Tibial artery (tissue), 4 donors: ENCODE measurements at regions of chr19 and their contacts with region 1.

Region 1: DNA sequence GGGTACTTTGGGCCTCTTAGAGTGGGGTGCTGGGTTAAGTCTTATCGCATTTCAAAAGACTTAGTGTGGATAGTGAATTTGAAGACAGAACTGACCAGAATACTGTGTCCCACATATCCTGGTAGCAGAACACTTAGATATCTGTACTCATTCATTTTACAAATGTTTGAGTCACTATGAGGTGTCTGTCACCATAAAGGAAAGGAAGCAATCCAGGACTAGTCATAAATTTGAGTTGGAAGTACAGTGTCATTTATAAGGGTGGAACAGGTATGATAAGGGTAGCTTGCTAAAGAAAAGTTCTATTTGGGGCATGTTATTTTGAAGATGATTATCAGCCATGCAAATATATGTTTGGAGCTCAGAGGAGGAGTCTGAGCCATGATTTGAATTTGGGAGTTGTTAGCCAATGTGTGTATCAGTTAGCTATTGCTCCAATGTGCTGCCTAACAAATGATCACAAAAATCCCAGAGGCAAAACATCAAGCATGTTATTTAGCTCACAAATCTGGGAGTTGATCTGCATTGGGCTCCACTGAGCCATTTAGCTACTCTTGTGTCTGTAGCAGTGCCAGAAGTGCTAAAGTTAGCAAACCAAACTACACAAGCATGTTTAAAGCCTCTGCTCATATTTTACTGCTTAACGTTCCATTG is 20.3 kb downstream of the ZNF699 start:
- DNase-seq: no peak
- H3K4me3 ChIP-seq: no peak overlapping the region
- H3K27ac ChIP-seq: no peak overlapping the region
- H3K4me1 ChIP-seq: no peaks in the 10 kb centered on the region
- H3K27me3 ChIP-seq: no peaks in the 10 kb centered on the region
- CTCF ChIP-seq: no peak

Region 2: GRCh38 chr19:9370738-9371619 is 81.6 kb after region 1 on chr19:
- intact Hi-C with region 1: loop called (anchors 10 kb)
- DNase-seq: no peak
- H3K4me3 ChIP-seq: no peak overlapping the region
- H3K27ac ChIP-seq: no peak overlapping the region
- H3K4me1 ChIP-seq: no peaks in the 10 kb centered on the region
- H3K27me3 ChIP-seq: no peaks in the 10 kb centered on the region
- CTCF ChIP-seq: no peak

Region 3: DNA sequence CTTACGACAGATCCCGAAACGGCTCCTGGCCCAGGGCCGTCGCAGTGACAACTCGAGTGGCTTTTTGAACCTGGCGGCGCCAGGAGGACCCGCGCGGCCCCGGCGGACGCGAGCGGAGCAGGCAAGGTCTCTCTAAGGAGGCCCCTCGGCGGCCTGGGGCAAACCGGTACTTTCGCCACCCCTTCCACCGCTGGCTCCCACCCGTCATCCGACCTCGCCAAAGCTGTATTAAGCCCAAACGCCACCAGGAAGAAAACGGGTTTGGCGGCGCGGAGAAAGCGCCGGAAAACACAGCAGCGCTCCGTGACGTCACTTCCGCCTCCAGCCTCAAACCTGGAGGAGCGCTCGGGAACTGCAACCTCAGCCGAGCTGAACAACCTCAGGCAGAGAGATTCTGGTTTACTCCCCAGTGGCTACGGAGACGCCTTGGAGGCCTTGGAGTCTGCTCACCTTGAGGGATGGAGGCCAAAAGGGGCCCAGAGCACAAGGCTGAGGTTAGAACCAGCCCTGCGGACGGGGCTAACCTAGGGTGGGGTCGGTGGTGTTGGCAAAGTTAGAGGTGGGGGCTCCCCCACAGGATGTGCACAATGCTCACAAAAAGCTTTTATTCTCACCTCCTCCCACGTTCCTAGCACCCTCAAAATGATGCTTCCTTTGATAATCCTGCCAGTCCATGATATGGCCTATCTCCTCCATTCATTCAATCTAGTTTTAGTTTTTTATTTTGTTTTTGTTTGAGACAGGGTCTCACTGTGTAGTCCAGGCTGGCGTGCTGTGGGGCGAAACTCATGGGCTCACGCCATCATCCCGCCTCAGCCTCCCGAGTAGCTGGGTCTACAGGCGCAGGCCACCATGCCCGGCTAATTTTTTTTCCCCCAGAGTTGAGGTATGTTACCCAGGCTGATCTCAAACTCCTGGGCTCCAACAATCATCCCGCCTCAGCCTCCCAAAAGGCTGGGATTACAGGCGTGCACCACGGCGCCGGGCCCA is 146.2 kb after region 1 on chr19 and contains the start of gene ZNF266:
- intact Hi-C with region 1: no loop called
- DNase-seq: peak; percentile 87 to 91
- H3K4me3 ChIP-seq: peak within 1 kb of the TSS; percentile 85 to 91
- H3K27ac ChIP-seq: peak within 1 kb of the TSS; percentile 89 to 92
- H3K4me1 ChIP-seq: peaks cover 0 to 23% (median 18%) of the 10 kb centered on the region in 4 donors
- H3K27me3 ChIP-seq: no peaks in the 10 kb centered on the region
- CTCF ChIP-seq: peak; percentile 82 to 87